PC-9 (cell line): ENCODE measurements at regions of chr2 and their contacts with region 1.

Region 1: GRCh38 chr2:174442546-174443510 is 44.0 kb downstream of the GPR155 start:
- DNase-seq: peak; percentile 71 to 79
- H3K4me3 ChIP-seq: no peak overlapping the region
- H3K27ac ChIP-seq: no peak overlapping the region; the same call in 1 of the 2 replicates
- H3K4me1 ChIP-seq: peaks cover 19% of the 10 kb centered on the region
- H3K27me3 ChIP-seq: no peaks in the 10 kb centered on the region
- CTCF ChIP-seq: no peak

Region 2: GRCh38 chr2:174326161-174327020 is 116.4 kb before region 1 on chr2:
- CTCF ChIA-PET with region 1: no interaction called
- POLR2A ChIA-PET with region 1: no interaction called
- intact Hi-C with region 1: no loop called
- DNase-seq: no peak
- H3K4me3 ChIP-seq: no peak overlapping the region
- H3K27ac ChIP-seq: no peak overlapping the region
- H3K4me1 ChIP-seq: no peaks in the 10 kb centered on the region
- H3K27me3 ChIP-seq: peaks cover 34% of the 10 kb centered on the region
- CTCF ChIP-seq: no peak

Region 3: GRCh38 chr2:174395284-174395968 is 47.4 kb before region 1 on chr2 and contains the start of gene SCRN3:
- CTCF ChIA-PET with region 1: interaction called, 15 read pairs
- POLR2A ChIA-PET with region 1: no interaction called
- intact Hi-C with region 1: loop called (anchors 5 kb)
- DNase-seq: peak; percentile 88 to 91
- H3K4me3 ChIP-seq: peak within 1 kb of the TSS; percentile 81
- H3K27ac ChIP-seq: peak within 1 kb of the TSS; percentile 40
- H3K4me1 ChIP-seq: peaks cover 27% of the 10 kb centered on the region
- H3K27me3 ChIP-seq: no peaks in the 10 kb centered on the region
- CTCF ChIP-seq: no peak
- total RNA-seq, gene SCRN3: 26.9 and 28.7 TPM in 2 replicates

Region 4: DNA sequence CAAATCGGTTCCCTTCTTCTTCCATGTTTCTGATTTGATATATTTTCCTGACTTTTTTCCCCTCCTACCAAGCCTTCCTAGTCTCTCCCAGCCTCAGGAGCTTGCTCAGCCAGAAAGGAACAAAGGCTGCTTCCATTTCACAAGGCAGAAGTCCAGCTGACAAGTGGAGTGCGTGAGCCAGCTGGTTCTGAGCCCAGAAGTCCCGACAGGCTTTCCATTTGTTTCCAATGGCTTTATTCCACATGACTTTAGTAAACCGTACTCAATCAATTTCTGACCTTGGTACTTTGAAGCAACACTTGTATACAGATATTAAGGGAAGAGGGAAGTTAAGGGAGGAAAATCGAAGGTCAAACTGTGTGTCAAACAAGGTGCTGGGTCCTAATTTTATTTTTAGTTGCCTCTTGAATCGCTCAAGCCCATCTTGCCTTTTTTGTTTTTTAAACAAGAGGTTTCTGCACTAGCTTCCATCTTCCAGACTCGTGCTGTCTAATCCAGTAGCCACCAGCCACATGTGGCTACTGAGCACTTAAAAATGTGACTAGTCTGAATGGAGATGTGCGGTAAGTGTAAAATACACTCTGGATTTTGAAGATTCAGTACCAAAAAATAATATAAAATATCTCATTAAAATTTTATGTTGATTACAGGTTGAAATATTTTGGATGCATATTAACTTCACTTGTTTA is 118.6 kb after region 1 on chr2:
- CTCF ChIA-PET with region 1: no interaction called
- POLR2A ChIA-PET with region 1: no interaction called
- intact Hi-C with region 1: no loop called
- DNase-seq: no peak
- H3K4me3 ChIP-seq: no peak overlapping the region
- H3K27ac ChIP-seq: no peak overlapping the region
- H3K4me1 ChIP-seq: no peaks in the 10 kb centered on the region
- H3K27me3 ChIP-seq: no peaks in the 10 kb centered on the region
- CTCF ChIP-seq: no peak